ENCODE measurements at regions of chr14 and their contacts with region 1.

Region 1: GRCh38 chr14:51989293-51990234 is at the start of gene RTRAF:
- DNase-seq: peak; percentile 96
- H3K4me3 ChIP-seq: peak within 1 kb of the TSS; percentile 92 to 100 (median 94)
- H3K27ac ChIP-seq: peak within 1 kb of the TSS; percentile 93 to 96 (median 94)
- H3K4me1 ChIP-seq: peaks cover 17 to 42% (median 39%) of the 10 kb centered on the region in 4 donors
- H3K27me3 ChIP-seq: no peaks in the 10 kb centered on the region
- CTCF ChIP-seq: peak in 1 of 3 experiments; percentile 5
- EP300 ChIP-seq: no peak
- POLR2A ChIP-seq: peak; percentile 75
- total RNA-seq, gene RTRAF: 66.4 to 122 (median 70.1) TPM

Region 2: GRCh38 chr14:51283402-51284085 is 706.0 kb before region 1 on chr14:
- intact Hi-C with region 1: loop called (anchors 10 kb)
- DNase-seq: no peak
- H3K4me3 ChIP-seq: no peak overlapping the region
- H3K27ac ChIP-seq: no peak overlapping the region
- H3K4me1 ChIP-seq: peaks cover 0 to 9% (median 0%) of the 10 kb centered on the region in 4 donors
- H3K27me3 ChIP-seq: no peaks in the 10 kb centered on the region
- CTCF ChIP-seq: peak; percentile 77 to 91 (median 91)
- EP300 ChIP-seq: no peak
- POLR2A ChIP-seq: no peak

Region 3: DNA sequence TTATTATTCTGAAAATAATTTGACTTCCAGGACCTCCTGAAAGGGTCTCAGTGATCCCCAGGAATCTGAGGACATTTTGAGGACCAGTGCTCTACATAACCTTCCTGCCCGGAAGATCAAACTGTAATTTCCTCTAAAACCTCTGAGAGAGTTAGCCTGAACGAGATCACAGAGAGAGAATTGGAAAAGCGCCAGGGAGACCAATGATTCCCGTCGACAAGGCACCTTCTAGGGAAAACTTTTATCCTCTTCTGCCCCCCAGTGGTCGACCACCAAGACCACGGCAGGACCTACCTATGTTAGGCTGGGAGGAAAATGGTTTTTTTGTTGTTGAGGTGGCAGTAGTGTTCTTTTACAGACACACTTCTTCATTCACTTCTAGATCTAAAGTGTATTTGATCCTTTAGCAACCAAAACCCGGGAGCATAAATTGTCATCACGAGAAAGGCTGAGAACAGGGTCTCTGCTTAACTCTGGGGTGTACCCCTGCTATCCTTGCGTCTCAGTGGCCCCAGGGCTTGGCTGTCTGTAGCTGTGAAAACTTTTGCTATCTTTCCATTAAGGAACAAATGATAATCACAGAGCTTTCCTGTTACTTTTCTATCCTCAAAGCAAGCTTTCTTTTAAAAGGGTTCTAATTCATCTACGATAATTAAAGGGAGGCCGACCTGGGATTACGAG is 142.2 kb after region 1 on chr14:
- intact Hi-C with region 1: loop called (anchors 2 kb)
- DNase-seq: no peak
- H3K4me3 ChIP-seq: no peak overlapping the region
- H3K27ac ChIP-seq: no peak overlapping the region
- H3K4me1 ChIP-seq: peaks cover 4 to 18% (median 12%) of the 10 kb centered on the region in 4 donors
- H3K27me3 ChIP-seq: no peaks in the 10 kb centered on the region
- CTCF ChIP-seq: peak; percentile 71 to 77 (median 72)
- EP300 ChIP-seq: no peak
- POLR2A ChIP-seq: no peak

Measured in esophagus muscularis mucosa (tissue), 4 donors.